MCF 10A (cell line): ENCODE measurements at regions of chr19 and their contacts with region 1.

Region 1: GRCh38 chr19:54674021-54674617 is 11.3 kb downstream of the LILRB4 start:
- DNase-seq: peak; percentile 67
- H3K4me3 Mint-ChIP-seq: no peak overlapping the region
- H3K27ac Mint-ChIP-seq: no peak overlapping the region
- H3K4me1 Mint-ChIP-seq: no peaks in the 10 kb centered on the region
- H3K27me3 Mint-ChIP-seq: no peaks in the 10 kb centered on the region
- CTCF ChIP-seq: peak; percentile 62

Region 2: GRCh38 chr19:54622431-54622830 is 51.7 kb before region 1 on chr19:
- CTCF ChIA-PET with region 1: interaction called, 14 read pairs
- POLR2A ChIA-PET with region 1: no interaction called
- intact Hi-C with region 1: no loop called
- DNase-seq: no peak
- H3K4me3 Mint-ChIP-seq: no peak overlapping the region
- H3K27ac Mint-ChIP-seq: no peak overlapping the region
- H3K4me1 Mint-ChIP-seq: no peaks in the 10 kb centered on the region
- H3K27me3 Mint-ChIP-seq: no peaks in the 10 kb centered on the region
- CTCF ChIP-seq: no peak

Region 3: DNA sequence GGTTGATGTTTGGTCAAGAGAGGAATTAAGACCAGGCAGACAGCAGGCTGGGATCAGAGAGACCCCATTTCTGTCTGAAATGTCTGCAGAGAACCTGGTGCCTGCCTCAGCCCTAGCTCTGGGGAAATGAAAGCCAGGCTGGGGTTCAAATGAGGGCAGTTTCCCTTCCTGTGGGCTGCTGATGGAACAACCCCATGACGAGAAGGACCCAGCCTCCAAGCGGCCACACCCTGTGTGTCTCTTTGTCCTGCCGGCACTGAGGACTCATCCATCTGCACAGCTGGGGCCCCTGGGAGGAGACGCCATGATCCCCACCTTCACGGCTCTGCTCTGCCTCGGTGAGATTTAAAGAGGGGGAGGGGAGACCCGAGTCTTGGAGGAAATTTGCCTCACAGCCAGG is 11.4 kb before region 1 on chr19 and contains the start of gene LILRB4:
- CTCF ChIA-PET with region 1: interaction called, 15 read pairs
- POLR2A ChIA-PET with region 1: no interaction called
- intact Hi-C with region 1: no loop called
- DNase-seq: no peak
- H3K4me3 Mint-ChIP-seq: no peak within 1 kb of the TSS
- H3K27ac Mint-ChIP-seq: no peak within 1 kb of the TSS
- H3K4me1 Mint-ChIP-seq: no peaks in the 10 kb centered on the region
- H3K27me3 Mint-ChIP-seq: no peaks in the 10 kb centered on the region
- CTCF ChIP-seq: no peak
- total RNA-seq, gene LILRB4: not detected in 2 replicates

Region 4: GRCh38 chr19:54921082-54921481 is 247.0 kb after region 1 on chr19:
- CTCF ChIA-PET with region 1: interaction called, 73 read pairs
- POLR2A ChIA-PET with region 1: no interaction called
- intact Hi-C with region 1: no loop called
- DNase-seq: no peak
- H3K4me3 Mint-ChIP-seq: no peak overlapping the region
- H3K27ac Mint-ChIP-seq: no peak overlapping the region
- H3K4me1 Mint-ChIP-seq: no peaks in the 10 kb centered on the region
- H3K27me3 Mint-ChIP-seq: no peaks in the 10 kb centered on the region
- CTCF ChIP-seq: no peak